H1 (cell line): ENCODE measurements at regions of chr15 and their contacts with region 1.

Region 1: GRCh38 chr15:52139599-52140491 is 27.3 kb upstream of the BCL2L10 start:
- DNase-seq: peak; percentile 51 to 91
- H3K4me3 ChIP-seq: no peak overlapping the region
- H3K27ac ChIP-seq: no peak overlapping the region
- H3K4me1 ChIP-seq: peaks cover 0 to 2% (median 0%) of the 10 kb centered on the region in 4 experiments; a peak in 3 of 7 replicates
- H3K27me3 ChIP-seq: no peaks in the 10 kb centered on the region
- CTCF ChIP-seq: peak; percentile 75 to 92 (median 86)
- EP300 ChIP-seq: no peak
- POLR2A ChIP-seq: no peak
- RAD21 ChIP-seq: peak; percentile 61 to 69; a peak in 3 of 4 replicates

Region 2: GRCh38 chr15:52071546-52071945 is 68.3 kb before region 1 on chr15:
- CTCF ChIA-PET with region 1: interaction called, 13 read pairs
- POLR2A ChIA-PET with region 1: no interaction called
- DNase-seq: no peak
- H3K4me3 ChIP-seq: no peak overlapping the region
- H3K27ac ChIP-seq: no peak overlapping the region
- H3K4me1 ChIP-seq: peaks cover 0 to 2% (median 0%) of the 10 kb centered on the region in 4 experiments; a peak in 1 of 7 replicates
- H3K27me3 ChIP-seq: no peaks in the 10 kb centered on the region
- CTCF ChIP-seq: no peak
- EP300 ChIP-seq: no peak
- POLR2A ChIP-seq: no peak
- RAD21 ChIP-seq: no peak

Region 3: GRCh38 chr15:52128568-52128967 is 11.3 kb before region 1 on chr15:
- CTCF ChIA-PET with region 1: interaction called, 18 read pairs
- POLR2A ChIA-PET with region 1: no interaction called
- DNase-seq: no peak
- H3K4me3 ChIP-seq: no peak overlapping the region
- H3K27ac ChIP-seq: no peak overlapping the region
- H3K4me1 ChIP-seq: no peaks in the 10 kb centered on the region
- H3K27me3 ChIP-seq: no peaks in the 10 kb centered on the region
- CTCF ChIP-seq: no peak
- EP300 ChIP-seq: no peak
- POLR2A ChIP-seq: no peak
- RAD21 ChIP-seq: no peak

Region 4: DNA sequence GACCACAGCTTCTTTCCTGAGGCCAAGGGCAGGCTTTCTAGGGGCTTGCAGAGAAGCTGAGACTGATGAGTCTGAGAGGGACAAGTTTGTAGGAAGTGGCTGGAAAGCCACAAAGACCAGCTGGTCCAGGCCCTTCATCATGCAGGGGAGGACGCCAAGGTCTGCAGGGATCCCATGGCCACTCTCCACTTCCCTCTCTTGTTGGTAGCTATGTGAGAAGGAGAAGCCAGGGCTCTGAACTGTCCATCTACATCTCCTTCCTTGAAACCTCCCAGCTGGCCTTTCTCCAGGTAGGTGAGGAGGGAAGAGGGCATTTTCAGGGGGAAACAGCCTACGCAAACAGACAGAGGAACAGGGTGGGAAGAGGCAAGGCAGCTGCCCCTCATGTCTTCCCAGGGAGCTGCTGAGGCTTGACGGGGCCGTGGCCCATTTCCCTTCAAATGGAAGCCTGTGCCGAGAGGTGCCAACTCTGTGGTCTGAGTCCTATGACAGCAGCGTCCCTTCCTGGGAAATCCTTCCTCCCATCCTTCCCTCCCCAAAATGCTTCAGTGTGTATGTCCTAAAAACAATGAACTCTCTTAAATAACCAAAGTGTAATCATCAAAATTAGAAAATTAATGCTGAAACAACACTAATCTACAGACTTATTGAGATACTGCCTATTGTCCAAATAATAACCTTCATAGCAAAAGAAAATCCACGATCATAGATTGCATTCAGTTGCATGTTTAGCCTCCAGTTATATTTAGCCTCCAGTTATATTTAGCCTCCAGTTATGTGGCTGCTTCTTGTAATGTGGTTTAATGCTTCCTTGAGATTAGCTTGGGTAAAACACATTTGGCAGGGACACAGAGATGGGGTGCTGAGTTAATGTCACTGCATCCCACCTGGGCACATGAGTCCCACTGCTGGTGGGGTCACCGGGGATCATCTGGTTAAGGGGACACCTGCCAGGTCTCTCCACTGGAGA is 15.3 kb after region 1 on chr15:
- CTCF ChIA-PET with region 1: interaction called, 27 read pairs
- POLR2A ChIA-PET with region 1: interaction called, 3 read pairs
- DNase-seq: peak in 1 of 2 experiments; percentile 28
- H3K4me3 ChIP-seq: no peak overlapping the region
- H3K27ac ChIP-seq: no peak overlapping the region
- H3K4me1 ChIP-seq: no peaks in the 10 kb centered on the region
- H3K27me3 ChIP-seq: no peaks in the 10 kb centered on the region
- CTCF ChIP-seq: no peak
- EP300 ChIP-seq: no peak
- POLR2A ChIP-seq: no peak
- RAD21 ChIP-seq: no peak

Region 5: GRCh38 chr15:52163321-52164190 is 23.7 kb after region 1 on chr15:
- CTCF ChIA-PET with region 1: interaction called, 41 read pairs
- POLR2A ChIA-PET with region 1: interaction called, 3 read pairs
- DNase-seq: peak in 1 of 2 experiments; percentile 79
- H3K4me3 ChIP-seq: no peak overlapping the region
- H3K27ac ChIP-seq: peak overlapping the region; percentile 29
- H3K4me1 ChIP-seq: no peaks in the 10 kb centered on the region; a peak in 2 of 7 replicates
- H3K27me3 ChIP-seq: no peaks in the 10 kb centered on the region
- CTCF ChIP-seq: peak; percentile 69 to 77 (median 74)
- EP300 ChIP-seq: no peak
- POLR2A ChIP-seq: no peak
- RAD21 ChIP-seq: peak; percentile 57 to 67